Activated naive CD4-positive, alpha-beta T cell treated with anti-CD3 and anti-CD28 coated beads for 36 hours (primary cell): ENCODE measurements at regions of chr3 and their contacts with region 1.

Region 1: DNA sequence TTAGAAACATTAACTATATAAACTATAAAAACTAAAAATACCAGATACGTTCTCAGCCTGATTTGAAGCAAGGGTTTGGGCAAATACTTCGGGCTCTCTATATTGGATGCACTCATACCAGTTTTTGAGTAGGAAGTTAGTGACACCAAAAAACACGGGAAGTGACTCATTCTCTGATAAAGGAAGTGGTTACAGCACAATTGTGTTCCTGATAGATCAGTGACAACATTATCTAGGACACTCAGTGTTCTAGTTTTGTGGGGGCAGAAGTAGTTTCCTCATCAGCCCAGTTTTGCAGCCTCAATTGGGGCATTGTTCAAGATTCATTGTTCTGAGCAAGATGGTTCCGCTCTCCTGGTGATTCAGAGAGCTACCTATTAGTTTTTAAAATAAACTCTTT is 469.6 kb upstream of the DPPA4 start:
- DNase-seq: peak; percentile 34
- H3K4me3 Mint-ChIP-seq: no peak overlapping the region
- H3K27ac Mint-ChIP-seq: no peak overlapping the region
- H3K4me1 Mint-ChIP-seq: peaks cover 37% of the 10 kb centered on the region
- H3K27me3 Mint-ChIP-seq: no peaks in the 10 kb centered on the region

Region 2: GRCh38 chr3:109597444-109597843 is 209.5 kb before region 1 on chr3:
- CTCF ChIA-PET with region 1: no interaction called
- intact Hi-C with region 1: no loop called
- DNase-seq: no peak
- H3K4me3 Mint-ChIP-seq: no peak overlapping the region
- H3K27ac Mint-ChIP-seq: no peak overlapping the region
- H3K4me1 Mint-ChIP-seq: no peaks in the 10 kb centered on the region
- H3K27me3 Mint-ChIP-seq: peaks cover 12% of the 10 kb centered on the region

Region 3: DNA sequence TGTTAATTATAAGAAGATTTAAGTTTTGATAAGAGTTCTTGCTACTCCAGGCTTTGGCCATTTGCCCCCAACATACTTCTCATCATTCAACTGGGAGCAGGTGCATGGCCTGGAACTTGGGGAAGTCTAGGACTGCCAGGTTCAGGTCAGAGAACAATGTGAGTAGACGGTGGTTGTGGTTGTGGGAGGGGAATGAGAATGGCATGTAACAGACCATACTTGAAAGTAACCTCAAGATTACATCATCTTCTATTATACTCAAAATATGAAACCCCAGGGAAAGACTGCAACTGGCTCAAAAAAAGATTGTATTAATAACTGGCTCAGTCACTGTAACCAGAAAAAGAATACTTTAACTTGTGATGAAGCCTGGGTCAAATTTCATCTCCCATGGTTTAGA is 104.7 kb before region 1 on chr3:
- CTCF ChIA-PET with region 1: no interaction called
- intact Hi-C with region 1: loop called (anchors 1 kb)
- DNase-seq: peak; percentile 56
- H3K4me3 Mint-ChIP-seq: no peak overlapping the region
- H3K27ac Mint-ChIP-seq: no peak overlapping the region
- H3K4me1 Mint-ChIP-seq: peaks cover 13% of the 10 kb centered on the region
- H3K27me3 Mint-ChIP-seq: peaks cover 3% of the 10 kb centered on the region

Region 4: DNA sequence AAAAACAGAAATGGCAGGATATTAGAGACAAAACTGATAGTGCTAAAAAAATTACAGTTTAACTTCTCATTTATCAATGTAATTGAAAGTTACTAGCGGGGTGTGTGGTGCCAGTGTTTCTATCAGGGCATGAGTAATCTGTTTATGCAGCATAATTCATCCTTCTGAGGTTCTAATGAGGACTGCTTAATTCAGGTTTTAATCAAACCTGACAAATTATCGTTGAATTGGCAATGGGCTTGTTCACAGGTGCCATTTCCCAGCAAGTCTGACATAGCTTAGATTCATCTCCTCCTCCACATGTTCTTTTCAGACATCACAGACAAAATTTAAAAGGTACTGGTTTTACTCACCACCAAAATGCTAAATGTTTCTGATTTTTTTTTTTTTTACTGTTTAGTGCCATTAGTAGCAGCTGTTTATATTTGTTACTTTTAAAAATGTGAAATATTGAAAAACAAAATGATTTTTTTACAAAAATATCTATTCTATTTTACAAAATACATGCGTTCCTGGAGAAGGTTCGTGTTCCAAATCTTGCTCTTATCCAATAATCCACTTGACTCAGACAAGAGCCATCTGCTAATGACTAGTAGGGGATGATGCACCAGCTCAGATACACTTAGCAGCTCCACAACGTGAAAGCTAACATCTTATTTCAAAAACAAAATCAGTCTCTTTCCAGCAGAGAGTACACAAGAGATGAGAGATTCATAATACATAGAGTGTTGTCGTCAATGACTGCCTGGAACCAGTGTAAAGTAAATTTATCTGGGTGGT is 21.9 kb before region 1 on chr3:
- CTCF ChIA-PET with region 1: no interaction called
- intact Hi-C with region 1: no loop called
- DNase-seq: no peak
- H3K4me3 Mint-ChIP-seq: no peak overlapping the region
- H3K27ac Mint-ChIP-seq: no peak overlapping the region
- H3K4me1 Mint-ChIP-seq: peaks cover 6% of the 10 kb centered on the region
- H3K27me3 Mint-ChIP-seq: no peaks in the 10 kb centered on the region

Region 5: DNA sequence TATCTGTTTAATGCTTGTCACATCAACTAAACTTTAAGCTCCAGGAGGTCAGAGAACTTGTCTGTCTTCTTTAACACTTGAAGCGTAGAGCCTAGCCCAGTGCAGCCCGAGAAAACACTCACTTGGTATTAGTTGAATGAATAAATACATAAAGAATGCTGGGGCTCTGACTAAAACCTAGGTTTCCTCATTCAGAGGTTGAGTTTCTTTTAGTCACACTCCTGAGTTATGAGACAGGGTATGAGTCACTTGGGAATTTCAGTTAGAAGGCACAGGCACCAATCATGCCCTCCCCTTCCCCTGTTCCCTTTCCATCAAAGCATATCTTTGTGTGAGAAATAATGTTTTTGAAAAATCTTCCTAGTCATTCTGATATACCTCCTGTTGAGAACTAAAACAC is 120.2 kb after region 1 on chr3:
- CTCF ChIA-PET with region 1: no interaction called
- intact Hi-C with region 1: loop called (anchors 1 kb)
- DNase-seq: peak; percentile 58
- H3K4me3 Mint-ChIP-seq: no peak overlapping the region
- H3K27ac Mint-ChIP-seq: no peak overlapping the region
- H3K4me1 Mint-ChIP-seq: peaks cover 12% of the 10 kb centered on the region
- H3K27me3 Mint-ChIP-seq: peaks cover 2% of the 10 kb centered on the region

Region 6: GRCh38 chr3:109973733-109974132 is 166.8 kb after region 1 on chr3:
- CTCF ChIA-PET with region 1: no interaction called
- intact Hi-C with region 1: no loop called
- DNase-seq: no peak
- H3K4me3 Mint-ChIP-seq: no peak overlapping the region
- H3K27ac Mint-ChIP-seq: no peak overlapping the region
- H3K4me1 Mint-ChIP-seq: no peaks in the 10 kb centered on the region
- H3K27me3 Mint-ChIP-seq: no peaks in the 10 kb centered on the region

Region 7: GRCh38 chr3:110157221-110157620 is 350.3 kb after region 1 on chr3:
- CTCF ChIA-PET with region 1: no interaction called
- intact Hi-C with region 1: no loop called
- DNase-seq: no peak
- H3K4me3 Mint-ChIP-seq: no peak overlapping the region
- H3K27ac Mint-ChIP-seq: no peak overlapping the region
- H3K4me1 Mint-ChIP-seq: no peaks in the 10 kb centered on the region
- H3K27me3 Mint-ChIP-seq: no peaks in the 10 kb centered on the region

Region 8: DNA sequence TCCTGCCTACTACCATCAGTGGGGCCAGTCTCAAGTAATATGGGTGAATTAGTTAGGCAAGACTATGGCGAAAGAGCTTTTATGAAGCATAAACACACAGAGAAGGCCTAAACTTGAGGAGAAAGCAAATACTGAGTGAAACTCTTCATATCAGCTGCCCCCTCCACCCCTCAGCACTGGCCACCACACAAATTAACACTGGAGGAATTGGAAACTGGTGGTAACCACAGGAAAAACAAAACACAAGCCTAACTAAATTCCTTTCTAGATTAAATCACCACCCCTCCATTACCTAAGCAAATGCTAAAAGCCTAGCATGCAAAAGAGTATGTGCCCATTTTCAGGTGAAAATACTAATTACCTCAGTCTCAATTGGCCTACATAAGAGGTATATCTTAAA is 490.0 kb after region 1 on chr3:
- CTCF ChIA-PET with region 1: no interaction called
- intact Hi-C with region 1: loop called (anchors 5 kb)
- DNase-seq: no peak
- H3K4me3 Mint-ChIP-seq: no peak overlapping the region
- H3K27ac Mint-ChIP-seq: no peak overlapping the region
- H3K4me1 Mint-ChIP-seq: no peaks in the 10 kb centered on the region
- H3K27me3 Mint-ChIP-seq: peaks cover 2% of the 10 kb centered on the region

Region 9: DNA sequence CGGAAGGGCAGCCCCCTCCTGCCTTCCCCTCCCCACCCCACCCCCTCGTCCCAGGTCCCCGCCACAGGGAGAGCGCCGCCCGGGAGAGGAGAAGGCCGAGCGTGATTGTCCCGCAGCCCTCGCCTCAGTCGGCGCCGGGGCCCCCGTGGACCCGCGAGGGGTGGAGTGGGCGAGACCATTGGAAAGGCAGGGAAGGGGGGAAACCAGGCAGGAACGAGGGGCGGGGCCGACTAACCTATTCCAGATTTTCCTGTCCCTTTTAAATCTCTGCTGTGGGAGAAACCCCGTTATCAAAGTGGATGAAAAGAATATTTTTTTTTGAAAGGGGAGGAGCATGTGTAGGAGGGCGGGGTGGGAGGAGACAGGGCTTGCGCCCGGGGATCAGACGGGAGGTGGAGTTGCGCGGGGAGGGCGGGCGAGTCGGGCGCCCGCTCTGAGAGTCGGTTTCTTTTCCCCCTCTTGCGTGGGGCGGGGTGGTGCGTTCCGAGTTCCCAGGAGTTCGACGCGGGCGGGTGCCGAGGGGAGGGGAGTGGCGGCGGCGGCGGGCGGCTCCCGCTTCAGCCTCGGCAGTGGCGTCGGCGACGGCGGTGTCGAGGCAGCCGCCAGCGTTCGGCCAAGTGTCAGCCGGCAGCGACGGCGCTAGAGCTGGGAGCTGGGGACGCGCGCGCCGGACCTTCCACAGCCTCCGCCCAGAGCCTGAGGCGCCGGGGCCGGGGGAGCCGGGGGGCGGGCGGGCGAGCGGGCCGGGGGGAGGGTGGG is 1264.5 kb after region 1 on chr3 and contains the start of gene NECTIN3:
- CTCF ChIA-PET with region 1: no interaction called
- intact Hi-C with region 1: loop called (anchors 5 kb)
- DNase-seq: peak; percentile 91
- H3K4me3 Mint-ChIP-seq: peak within 1 kb of the TSS; percentile 85
- H3K27ac Mint-ChIP-seq: peak within 1 kb of the TSS; percentile 27
- H3K4me1 Mint-ChIP-seq: peaks cover 24% of the 10 kb centered on the region
- H3K27me3 Mint-ChIP-seq: peaks cover 40% of the 10 kb centered on the region
- total RNA-seq, gene NECTIN3: 3.0 to 3.5 TPM

Region 10: GRCh38 chr3:111326144-111326995 is 1519.4 kb after region 1 on chr3:
- CTCF ChIA-PET with region 1: no interaction called
- intact Hi-C with region 1: loop called (anchors 5 kb)
- DNase-seq: no peak
- H3K4me3 Mint-ChIP-seq: no peak overlapping the region
- H3K27ac Mint-ChIP-seq: no peak overlapping the region
- H3K4me1 Mint-ChIP-seq: peaks cover 34% of the 10 kb centered on the region
- H3K27me3 Mint-ChIP-seq: no peaks in the 10 kb centered on the region